ENCODE measurements at regions of chr12 and their contacts with region 1.

Region 1: GRCh38 chr12:121793838-121794533 is 498 bp upstream of the RHOF start:
- DNase-seq: peak; percentile 91 to 97 (median 95)
- H3K4me3 ChIP-seq: peak overlapping the region; percentile 99
- H3K4me3 Mint-ChIP-seq: peak overlapping the region; percentile 76 to 93 (median 89)
- H3K27ac ChIP-seq: peak overlapping the region; percentile 79
- H3K27ac Mint-ChIP-seq: peak overlapping the region; percentile 84 to 99 (median 98)
- H3K4me1 ChIP-seq: peaks cover 64% of the 10 kb centered on the region
- H3K4me1 Mint-ChIP-seq: peaks cover 54 to 74% (median 58%) of the 10 kb centered on the region in 3 donors
- H3K27me3 ChIP-seq: no peaks in the 10 kb centered on the region
- H3K27me3 Mint-ChIP-seq: peaks cover 0 to 2% of the 10 kb centered on the region in 2 donors

Region 2: DNA sequence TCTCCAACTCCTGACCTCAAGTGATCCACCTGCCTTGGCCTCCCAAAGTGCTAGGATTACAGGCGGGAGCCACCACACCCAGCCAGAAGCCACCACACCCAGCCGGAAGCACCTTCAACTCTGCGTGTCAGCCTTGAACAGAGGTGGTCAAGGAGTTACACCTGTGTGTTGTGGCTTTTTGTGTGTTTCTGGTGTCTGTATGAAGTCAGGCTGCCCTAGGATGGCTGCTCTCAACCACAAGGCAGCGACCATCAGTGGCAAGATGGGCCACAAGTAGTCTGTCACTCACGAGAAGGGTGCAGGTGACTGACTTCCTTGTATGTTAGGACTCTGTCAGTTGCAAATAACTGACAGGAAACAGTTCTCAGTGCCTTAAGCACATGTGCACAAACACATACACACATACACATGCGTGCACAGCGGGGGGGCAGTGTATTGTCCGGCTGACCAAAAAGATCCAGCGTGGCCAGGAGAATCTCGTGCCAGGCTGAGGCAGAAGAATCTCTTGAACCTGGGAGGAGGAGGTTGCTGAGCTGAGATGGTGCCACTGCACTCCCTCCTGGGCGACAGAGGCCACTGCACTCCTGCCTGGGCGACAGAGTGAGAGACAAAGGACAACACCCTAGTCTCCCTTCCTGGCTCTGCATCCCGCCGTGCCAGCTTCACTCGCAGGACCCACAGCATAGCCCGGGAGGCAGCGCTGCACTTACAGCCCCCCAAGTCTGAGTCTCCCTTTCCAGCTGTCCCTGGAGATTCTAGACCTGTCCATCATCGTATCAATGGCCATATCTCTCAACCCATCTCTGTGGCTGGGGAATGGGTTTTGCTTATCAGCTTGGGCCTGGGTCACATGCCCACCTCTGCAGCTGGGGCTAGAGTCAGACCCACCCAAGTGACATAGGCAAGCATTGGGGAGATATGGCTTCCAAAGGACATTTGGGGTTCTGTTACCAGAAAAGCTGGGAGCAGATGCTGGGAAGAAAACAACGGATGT is 570.4 kb before region 1 on chr12:
- CTCF ChIA-PET with region 1: no interaction called
- POLR2A ChIA-PET with region 1: no interaction called
- DNase-seq: peak in 4 of 5 donors; percentile 9 to 68 (median 52)
- H3K4me3 ChIP-seq: no peak overlapping the region
- H3K4me3 Mint-ChIP-seq: peak overlapping the region in 6 of 7 donors; percentile 63 to 86 (median 71)
- H3K27ac ChIP-seq: no peak overlapping the region
- H3K27ac Mint-ChIP-seq: peak overlapping the region; percentile 64 to 94 (median 90)
- H3K4me1 ChIP-seq: peaks cover 46% of the 10 kb centered on the region
- H3K4me1 Mint-ChIP-seq: peaks cover 24 to 36% (median 25%) of the 10 kb centered on the region in 3 donors
- H3K27me3 ChIP-seq: no peaks in the 10 kb centered on the region
- H3K27me3 Mint-ChIP-seq: no peaks in the 10 kb centered on the region

Region 3: DNA sequence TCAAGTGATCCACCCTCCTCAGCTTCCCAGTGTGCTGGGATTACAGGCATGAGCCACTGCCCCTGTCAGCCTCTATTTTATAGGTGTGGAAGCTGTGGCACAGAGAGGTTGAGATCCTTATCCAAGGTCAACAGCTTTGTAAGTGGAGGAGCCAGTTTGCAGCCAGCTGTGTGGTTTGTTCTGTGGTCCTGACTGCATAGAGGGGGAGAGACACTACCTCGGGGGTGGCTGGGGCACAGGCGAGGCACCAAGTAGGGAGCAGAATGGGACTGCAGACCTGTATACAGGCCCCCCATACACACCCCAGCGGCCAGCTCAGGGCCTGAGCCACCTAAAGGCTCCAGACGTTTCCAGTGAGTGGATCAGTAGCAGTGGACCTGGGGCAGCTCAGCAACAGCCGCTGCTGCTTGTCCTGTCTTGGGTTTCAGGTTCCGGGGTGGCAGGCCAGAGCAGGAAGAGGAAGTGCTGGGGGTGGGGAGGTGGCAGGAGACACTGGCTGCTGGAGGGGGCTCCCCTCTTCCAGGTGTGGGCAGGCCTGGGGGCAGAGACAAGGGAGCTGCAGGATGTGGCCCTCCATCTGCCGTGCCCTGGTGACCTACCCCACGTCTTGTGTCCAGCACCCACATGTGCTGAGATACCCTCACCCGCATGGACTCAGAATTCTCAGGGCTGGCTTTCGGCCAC is 156.6 kb before region 1 on chr12:
- CTCF ChIA-PET with region 1: interaction called, 10 read pairs
- POLR2A ChIA-PET with region 1: interaction called, 3 read pairs
- DNase-seq: peak; percentile 37 to 72 (median 61)
- H3K4me3 ChIP-seq: peak overlapping the region; percentile 53
- H3K4me3 Mint-ChIP-seq: peak overlapping the region; percentile 39 to 88 (median 74)
- H3K27ac ChIP-seq: peak overlapping the region; percentile 69
- H3K27ac Mint-ChIP-seq: peak overlapping the region; percentile 85 to 96 (median 92)
- H3K4me1 ChIP-seq: peaks cover 54% of the 10 kb centered on the region
- H3K4me1 Mint-ChIP-seq: peaks cover 41 to 65% (median 46%) of the 10 kb centered on the region in 3 donors
- H3K27me3 ChIP-seq: no peaks in the 10 kb centered on the region
- H3K27me3 Mint-ChIP-seq: no peaks in the 10 kb centered on the region

Region 4: DNA sequence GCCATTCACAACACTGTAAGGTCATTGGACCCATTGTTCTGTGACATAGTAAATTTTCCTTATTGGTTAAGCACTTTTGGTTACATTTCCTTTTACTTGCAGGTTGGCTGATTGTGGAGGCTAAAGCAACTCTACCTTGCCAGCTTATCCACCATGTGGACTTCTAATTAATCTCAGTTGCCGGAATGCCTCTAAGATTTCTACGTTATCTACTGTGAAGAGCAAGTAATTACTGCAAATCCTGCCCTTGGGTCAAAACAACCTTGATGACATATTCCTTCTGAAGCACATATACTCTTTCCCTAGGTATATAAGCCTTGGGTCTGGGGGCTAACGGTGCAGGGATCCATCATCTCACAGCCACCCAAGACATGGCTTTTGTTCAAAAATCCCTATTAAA is 105.0 kb before region 1 on chr12:
- CTCF ChIA-PET with region 1: interaction called, 104 read pairs
- POLR2A ChIA-PET with region 1: interaction called, 5 read pairs
- DNase-seq: no peak
- H3K4me3 ChIP-seq: no peak overlapping the region
- H3K4me3 Mint-ChIP-seq: peak overlapping the region in 1 of 7 donors; percentile 49
- H3K27ac ChIP-seq: no peak overlapping the region
- H3K27ac Mint-ChIP-seq: peak overlapping the region in 2 of 8 donors; percentile 59 to 73
- H3K4me1 ChIP-seq: peaks cover 5% of the 10 kb centered on the region
- H3K4me1 Mint-ChIP-seq: peaks cover 7 to 10% (median 8%) of the 10 kb centered on the region in 3 donors
- H3K27me3 ChIP-seq: no peaks in the 10 kb centered on the region
- H3K27me3 Mint-ChIP-seq: peaks cover 0 to 2% of the 10 kb centered on the region in 2 donors

Region 5: GRCh38 chr12:121712461-121713256 is 81.3 kb before region 1 on chr12 and contains the start of gene TMEM120B:
- CTCF ChIA-PET with region 1: interaction called, 42 read pairs
- POLR2A ChIA-PET with region 1: interaction called, 13 read pairs
- DNase-seq: peak; percentile 75 to 91 (median 86)
- H3K4me3 ChIP-seq: peak within 1 kb of the TSS; percentile 89
- H3K4me3 Mint-ChIP-seq: peak within 1 kb of the TSS; percentile 92 to 99 (median 95)
- H3K27ac ChIP-seq: peak within 1 kb of the TSS; percentile 70
- H3K27ac Mint-ChIP-seq: peak within 1 kb of the TSS; percentile 86 to 99 (median 92)
- H3K4me1 ChIP-seq: peaks cover 17% of the 10 kb centered on the region
- H3K4me1 Mint-ChIP-seq: peaks cover 14 to 26% (median 18%) of the 10 kb centered on the region in 3 donors
- H3K27me3 ChIP-seq: no peaks in the 10 kb centered on the region
- H3K27me3 Mint-ChIP-seq: peaks cover 0 to 2% of the 10 kb centered on the region in 2 donors
- total RNA-seq, gene TMEM120B: 12.5 to 15.2 TPM

Region 6: GRCh38 chr12:121741743-121742142 is 52.2 kb before region 1 on chr12:
- CTCF ChIA-PET with region 1: no interaction called
- POLR2A ChIA-PET with region 1: no interaction called
- DNase-seq: no peak
- H3K4me3 ChIP-seq: no peak overlapping the region
- H3K4me3 Mint-ChIP-seq: no peak overlapping the region
- H3K27ac ChIP-seq: no peak overlapping the region
- H3K27ac Mint-ChIP-seq: no peak overlapping the region
- H3K4me1 ChIP-seq: no peaks in the 10 kb centered on the region
- H3K4me1 Mint-ChIP-seq: no peaks in the 10 kb centered on the region
- H3K27me3 ChIP-seq: no peaks in the 10 kb centered on the region
- H3K27me3 Mint-ChIP-seq: peaks cover 0 to 1% of the 10 kb centered on the region in 2 donors

Region 7: GRCh38 chr12:121811434-121812319 is 17.7 kb after region 1 on chr12:
- CTCF ChIA-PET with region 1: interaction called, 1,908 read pairs
- POLR2A ChIA-PET with region 1: interaction called, 277 read pairs
- DNase-seq: peak; percentile 68 to 77 (median 69)
- H3K4me3 ChIP-seq: peak overlapping the region; percentile 74
- H3K4me3 Mint-ChIP-seq: peak overlapping the region; percentile 80 to 91 (median 84)
- H3K27ac ChIP-seq: peak overlapping the region; percentile 17
- H3K27ac Mint-ChIP-seq: peak overlapping the region; percentile 50 to 92 (median 78)
- H3K4me1 ChIP-seq: peaks cover 48% of the 10 kb centered on the region
- H3K4me1 Mint-ChIP-seq: peaks cover 42 to 75% (median 56%) of the 10 kb centered on the region in 3 donors
- H3K27me3 ChIP-seq: no peaks in the 10 kb centered on the region
- H3K27me3 Mint-ChIP-seq: peaks cover 0 to 2% of the 10 kb centered on the region in 2 donors

Region 8: DNA sequence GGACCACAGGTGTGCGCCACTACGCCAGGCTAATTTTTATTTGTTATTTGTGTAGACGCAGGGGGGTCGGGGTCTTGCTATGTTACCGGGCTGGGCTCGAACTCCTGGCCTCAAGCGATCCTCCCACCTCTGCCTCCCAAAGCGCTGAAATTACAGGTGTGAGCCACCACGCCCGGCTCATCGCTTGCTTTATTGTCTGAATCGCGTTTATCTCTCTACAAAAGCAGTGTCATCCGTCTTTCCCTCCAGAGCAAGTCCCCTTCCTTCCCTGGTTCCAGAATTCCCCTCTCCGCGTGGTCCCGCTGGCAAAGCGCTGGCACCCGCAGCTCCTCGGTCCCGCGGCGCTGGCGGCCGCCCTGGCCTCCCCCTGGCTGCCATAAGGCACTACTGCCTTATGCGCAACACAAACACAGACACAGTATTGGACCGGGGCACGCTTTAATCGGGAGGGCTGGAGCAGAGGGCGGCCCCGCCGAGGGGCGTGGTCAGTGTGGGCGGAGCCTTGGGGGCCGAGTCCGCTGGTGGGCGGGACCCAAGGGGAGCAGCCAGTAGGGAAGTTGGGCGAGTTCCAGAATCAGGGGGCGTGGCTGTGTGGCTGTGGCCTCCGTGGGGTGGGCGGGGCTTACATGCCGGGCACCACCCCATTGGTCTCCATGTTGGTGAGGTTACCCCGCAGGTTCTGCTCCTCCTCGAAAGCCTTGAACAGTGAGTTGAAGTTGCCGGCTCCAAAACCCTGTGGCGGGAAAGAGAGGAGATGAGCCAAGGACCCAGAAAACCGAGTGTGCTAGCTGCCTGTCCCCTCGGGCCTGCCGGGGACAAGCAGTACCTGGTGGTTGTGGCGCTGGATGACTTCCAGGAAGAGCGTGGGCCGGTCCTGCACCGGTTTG is 45.4 kb after region 1 on chr12:
- CTCF ChIA-PET with region 1: interaction called, 45 read pairs
- POLR2A ChIA-PET with region 1: interaction called, 4 read pairs
- DNase-seq: peak; percentile 99 to 100 (median 99)
- H3K4me3 ChIP-seq: peak overlapping the region; percentile 82
- H3K4me3 Mint-ChIP-seq: peak overlapping the region; percentile 85 to 100 (median 98)
- H3K27ac ChIP-seq: peak overlapping the region; percentile 68
- H3K27ac Mint-ChIP-seq: peak overlapping the region in 7 of 8 donors; percentile 81 to 95 (median 90)
- H3K4me1 ChIP-seq: peaks cover 8% of the 10 kb centered on the region
- H3K4me1 Mint-ChIP-seq: peaks cover 15 to 18% (median 15%) of the 10 kb centered on the region in 3 donors
- H3K27me3 ChIP-seq: no peaks in the 10 kb centered on the region
- H3K27me3 Mint-ChIP-seq: no peaks in the 10 kb centered on the region

Region 9: GRCh38 chr12:121917979-121918678 is 124.1 kb after region 1 on chr12 and contains the start of gene CFAP251:
- CTCF ChIA-PET with region 1: interaction called, 10 read pairs
- POLR2A ChIA-PET with region 1: no interaction called
- DNase-seq: peak; percentile 94 to 99 (median 98)
- H3K4me3 ChIP-seq: peak within 1 kb of the TSS; percentile 54
- H3K4me3 Mint-ChIP-seq: peak within 1 kb of the TSS; percentile 72 to 88 (median 85)
- H3K27ac ChIP-seq: peak within 1 kb of the TSS; percentile 64
- H3K27ac Mint-ChIP-seq: peak within 1 kb of the TSS; percentile 91 to 99 (median 96)
- H3K4me1 ChIP-seq: peaks cover 9% of the 10 kb centered on the region
- H3K4me1 Mint-ChIP-seq: peaks cover 5 to 14% (median 11%) of the 10 kb centered on the region in 3 donors
- H3K27me3 ChIP-seq: no peaks in the 10 kb centered on the region
- H3K27me3 Mint-ChIP-seq: no peaks in the 10 kb centered on the region
- total RNA-seq, gene CFAP251: 0.31 to 0.72 TPM